Activated CD8-positive, alpha-beta T cell treated with anti-CD3 and anti-CD28 coated beads for 36 hours (primary cell): ENCODE measurements at regions of chr11 and their contacts with region 1.

Region 1: GRCh38 chr11:64652586-64653387 is 61.8 kb downstream of the SLC22A12 start:
- DNase-seq: peak; percentile 85
- ATAC-seq: peak; percentile 91
- H3K4me3 Mint-ChIP-seq: no peak overlapping the region
- H3K27ac Mint-ChIP-seq: no peak overlapping the region
- H3K4me1 Mint-ChIP-seq: no peaks in the 10 kb centered on the region
- H3K27me3 Mint-ChIP-seq: peaks cover 3% of the 10 kb centered on the region
- CTCF ChIP-seq: peak; percentile 80

Region 2: GRCh38 chr11:64489831-64490441 is 162.9 kb before region 1 on chr11:
- CTCF ChIA-PET with region 1: interaction called, 11 read pairs
- POLR2A ChIA-PET with region 1: no interaction called
- intact Hi-C with region 1: no loop called
- DNase-seq: peak; percentile 54
- ATAC-seq: peak; percentile 74
- H3K4me3 Mint-ChIP-seq: no peak overlapping the region
- H3K27ac Mint-ChIP-seq: no peak overlapping the region
- H3K4me1 Mint-ChIP-seq: peaks cover 3% of the 10 kb centered on the region
- H3K27me3 Mint-ChIP-seq: peaks cover 28% of the 10 kb centered on the region
- CTCF ChIP-seq: peak; percentile 83

Region 3: GRCh38 chr11:64553551-64554201 is 99.1 kb before region 1 on chr11:
- CTCF ChIA-PET with region 1: interaction called, 3 read pairs
- POLR2A ChIA-PET with region 1: no interaction called
- intact Hi-C with region 1: loop called (anchors 2 kb)
- DNase-seq: peak; percentile 65
- ATAC-seq: peak; percentile 77
- H3K4me3 Mint-ChIP-seq: no peak overlapping the region
- H3K27ac Mint-ChIP-seq: no peak overlapping the region
- H3K4me1 Mint-ChIP-seq: no peaks in the 10 kb centered on the region
- H3K27me3 Mint-ChIP-seq: no peaks in the 10 kb centered on the region
- CTCF ChIP-seq: peak; percentile 94